ENCODE measurements at regions of chr10 and their contacts with region 1.

Region 1: GRCh38 chr10:12068449-12069269 is at the start of gene DHTKD1:
- DNase-seq: peak; percentile 88 to 98
- H3K4me3 ChIP-seq: peak within 1 kb of the TSS; percentile 83
- H3K27ac ChIP-seq: peak within 1 kb of the TSS; percentile 10; the same call in 1 of the 2 replicates
- H3K4me1 ChIP-seq: no peaks in the 10 kb centered on the region
- H3K27me3 ChIP-seq: no peaks in the 10 kb centered on the region
- CTCF ChIP-seq: no peak; the same call in 1 of the 2 replicates
- total RNA-seq, gene DHTKD1: 41.1 and 43.8 TPM in 2 replicates

Region 2: DNA sequence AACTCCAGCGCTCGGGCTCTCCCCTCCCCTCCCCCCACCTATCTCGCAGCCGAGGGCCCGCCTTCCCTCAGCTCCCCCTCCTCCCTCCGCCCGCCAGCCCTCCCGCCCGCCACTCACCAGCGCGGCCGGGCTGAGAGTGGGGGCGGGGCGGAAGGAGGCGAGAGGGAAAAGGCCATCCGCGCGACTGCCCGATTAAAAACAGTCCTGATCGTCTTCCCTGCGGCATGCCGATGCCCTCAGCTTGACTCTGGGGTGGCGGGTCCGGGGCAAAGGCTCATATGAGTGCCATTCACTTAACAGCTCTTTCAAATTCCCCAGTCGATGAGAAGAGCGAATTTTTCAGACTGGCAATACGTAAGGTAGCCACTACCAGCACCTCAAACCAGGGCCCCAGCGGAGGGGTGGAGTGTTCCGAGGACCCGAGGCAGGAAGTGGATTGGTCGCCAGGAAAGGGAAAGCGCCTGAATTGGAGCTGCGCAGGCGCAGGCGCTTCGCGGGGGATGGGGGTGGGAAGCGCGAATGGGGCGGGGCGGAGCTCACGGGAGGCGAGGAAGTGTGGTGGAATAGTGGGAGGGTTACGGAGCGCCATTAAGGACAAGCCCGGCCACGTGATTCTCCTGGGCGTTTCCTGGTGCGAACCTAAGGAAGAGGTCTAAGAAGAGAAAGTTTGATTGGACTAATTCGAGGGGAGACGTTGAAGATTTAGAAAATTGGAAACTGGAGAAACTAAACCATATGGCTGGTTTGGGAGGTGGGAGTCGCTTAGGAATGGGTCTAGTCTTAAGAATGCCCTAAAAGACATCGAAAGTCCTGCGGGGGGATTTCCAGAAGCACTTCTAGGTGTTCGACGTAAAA is 25.6 kb before region 1 on chr10 and contains the start of gene UPF2:
- CTCF ChIA-PET with region 1: no interaction called
- POLR2A ChIA-PET with region 1: interaction called, 13 read pairs
- intact Hi-C with region 1: loop called (anchors 1 kb)
- DNase-seq: peak; percentile 89 to 96
- H3K4me3 ChIP-seq: peak within 1 kb of the TSS; percentile 90
- H3K27ac ChIP-seq: peak within 1 kb of the TSS; percentile 86
- H3K4me1 ChIP-seq: peaks cover 17% of the 10 kb centered on the region
- H3K27me3 ChIP-seq: no peaks in the 10 kb centered on the region
- CTCF ChIP-seq: no peak
- total RNA-seq, gene UPF2: 18.4 and 25.9 TPM in 2 replicates

Region 3: DNA sequence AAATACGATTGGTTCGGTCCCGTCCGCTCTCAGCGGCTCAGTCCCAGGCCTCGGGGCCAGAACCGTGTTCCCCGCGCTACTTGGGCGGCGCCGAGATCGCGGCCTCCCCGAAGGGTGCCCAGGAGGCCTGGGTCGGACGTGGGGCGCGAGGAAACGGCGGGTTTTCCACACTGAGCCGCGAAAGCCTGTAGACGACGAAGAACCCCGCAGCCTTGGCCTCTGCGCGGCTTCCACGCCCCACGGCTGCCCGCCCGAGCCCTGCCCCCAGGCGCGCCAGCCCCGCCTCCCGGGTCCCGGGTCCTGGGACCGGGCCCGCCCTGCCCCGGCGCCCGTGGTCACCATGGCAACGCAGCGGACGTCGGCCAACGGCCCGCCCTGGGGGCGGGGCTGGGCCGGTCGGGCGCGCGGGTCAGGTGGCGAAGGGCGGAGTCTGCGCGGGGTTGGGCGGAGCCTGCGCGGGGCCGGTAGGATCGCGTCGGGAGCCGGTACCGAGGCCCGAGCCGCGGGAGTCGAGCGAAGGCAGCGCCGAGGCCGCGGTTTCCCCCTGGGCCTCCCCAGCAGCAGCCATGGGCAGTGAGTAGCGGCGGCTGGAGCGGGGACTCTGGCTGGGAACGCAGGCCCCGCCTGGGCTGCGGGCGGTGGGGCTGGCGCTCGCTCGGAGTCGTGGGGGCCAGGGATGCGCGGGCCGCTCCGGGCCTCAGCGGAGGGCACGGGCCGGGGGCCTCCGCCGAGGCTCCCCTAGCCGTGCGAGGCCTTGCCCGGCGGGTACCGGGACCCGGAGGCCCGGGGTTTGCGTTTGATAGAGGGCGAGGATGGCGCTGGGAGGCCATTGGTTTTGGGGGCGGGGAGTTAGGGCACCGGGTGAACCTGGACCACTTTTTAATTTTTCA is 60.8 kb after region 1 on chr10 and contains the start of gene SEC61A2:
- CTCF ChIA-PET with region 1: no interaction called
- POLR2A ChIA-PET with region 1: no interaction called
- intact Hi-C with region 1: loop called (anchors 5 kb)
- DNase-seq: peak; percentile 67 to 98
- H3K4me3 ChIP-seq: peak within 1 kb of the TSS; percentile 79
- H3K27ac ChIP-seq: peak within 1 kb of the TSS; percentile 60
- H3K4me1 ChIP-seq: no peaks in the 10 kb centered on the region
- H3K27me3 ChIP-seq: no peaks in the 10 kb centered on the region
- CTCF ChIP-seq: no peak
- total RNA-seq, gene SEC61A2: 4.9 and 6.8 TPM in 2 replicates

Region 4: GRCh38 chr10:12308057-12308456 is 239.4 kb after region 1 on chr10:
- CTCF ChIA-PET with region 1: no interaction called
- POLR2A ChIA-PET with region 1: no interaction called
- intact Hi-C with region 1: no loop called
- DNase-seq: no peak
- H3K4me3 ChIP-seq: no peak overlapping the region
- H3K27ac ChIP-seq: no peak overlapping the region
- H3K4me1 ChIP-seq: no peaks in the 10 kb centered on the region
- H3K27me3 ChIP-seq: no peaks in the 10 kb centered on the region
- CTCF ChIP-seq: no peak